Activated B cell treated with CpG ODN at 0.5 μM for 24 hours (primary cell): ENCODE measurements at regions of chr1 and their contacts with region 1.

Region 1: GRCh38 chr1:212857992-212858460 is at the start of gene FLVCR1:
- DNase-seq: peak; percentile 90
- ATAC-seq: peak; percentile 99
- H3K4me3 Mint-ChIP-seq: peak within 1 kb of the TSS; percentile 99
- H3K27ac Mint-ChIP-seq: peak within 1 kb of the TSS; percentile 93
- H3K4me1 Mint-ChIP-seq: peaks cover 22% of the 10 kb centered on the region
- H3K27me3 Mint-ChIP-seq: no peaks in the 10 kb centered on the region
- CTCF ChIP-seq: no peak
- total RNA-seq, gene FLVCR1: 12.7 and 16.4 TPM in 2 replicates

Region 2: GRCh38 chr1:212558693-212559480 is 299.1 kb before region 1 on chr1:
- CTCF ChIA-PET with region 1: no interaction called
- POLR2A ChIA-PET with region 1: interaction called, 9 read pairs
- intact Hi-C with region 1: loop called (anchors 2 kb)
- DNase-seq: peak; percentile 93
- ATAC-seq: peak; percentile 88
- H3K4me3 Mint-ChIP-seq: peak overlapping the region; percentile 88
- H3K27ac Mint-ChIP-seq: peak overlapping the region; percentile 93
- H3K4me1 Mint-ChIP-seq: peaks cover 13% of the 10 kb centered on the region
- H3K27me3 Mint-ChIP-seq: peaks cover 2% of the 10 kb centered on the region
- CTCF ChIP-seq: no peak

Region 3: GRCh38 chr1:212814537-212815334 is 43.3 kb before region 1 on chr1:
- CTCF ChIA-PET with region 1: no interaction called
- POLR2A ChIA-PET with region 1: interaction called, 9 read pairs
- intact Hi-C with region 1: loop called (anchors 5 kb)
- DNase-seq: no peak
- ATAC-seq: no peak
- H3K4me3 Mint-ChIP-seq: no peak overlapping the region
- H3K27ac Mint-ChIP-seq: no peak overlapping the region
- H3K4me1 Mint-ChIP-seq: peaks cover 6% of the 10 kb centered on the region
- H3K27me3 Mint-ChIP-seq: no peaks in the 10 kb centered on the region
- CTCF ChIP-seq: no peak

Region 4: DNA sequence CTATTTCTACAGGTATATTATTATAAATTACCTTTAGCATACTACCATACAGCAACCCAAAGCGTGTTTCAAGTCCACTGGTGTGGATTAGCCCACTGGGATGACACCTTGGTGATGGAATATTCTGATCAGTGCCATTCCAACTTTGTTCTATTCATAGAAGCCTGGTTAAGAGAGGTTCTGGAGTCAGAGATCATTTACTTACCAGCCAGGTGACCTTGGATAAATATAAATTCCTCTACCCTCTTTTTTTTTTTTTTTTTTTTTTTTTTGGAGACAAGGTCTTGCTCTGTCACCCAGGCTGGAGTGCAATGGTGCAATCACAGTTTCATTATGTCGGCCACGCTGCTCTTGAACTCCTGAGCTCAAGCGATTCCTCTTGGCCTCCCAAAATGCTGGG is 10.5 kb before region 1 on chr1 and contains the start of gene SPATA45:
- CTCF ChIA-PET with region 1: no interaction called
- POLR2A ChIA-PET with region 1: no interaction called
- intact Hi-C with region 1: loop called (anchors 1 kb)
- DNase-seq: no peak
- ATAC-seq: no peak
- H3K4me3 Mint-ChIP-seq: no peak within 1 kb of the TSS
- H3K27ac Mint-ChIP-seq: no peak within 1 kb of the TSS
- H3K4me1 Mint-ChIP-seq: no peaks in the 10 kb centered on the region
- H3K27me3 Mint-ChIP-seq: no peaks in the 10 kb centered on the region
- CTCF ChIP-seq: no peak
- total RNA-seq, gene SPATA45: 0.64 TPM in 1 of 2 replicates, not detected in the other

Region 5: GRCh38 chr1:213051127-213051880 is 193.3 kb after region 1 on chr1 and contains the start of gene RPS6KC1:
- CTCF ChIA-PET with region 1: no interaction called
- POLR2A ChIA-PET with region 1: no interaction called
- intact Hi-C with region 1: loop called (anchors 1 kb)
- DNase-seq: peak; percentile 73
- ATAC-seq: peak; percentile 93
- H3K4me3 Mint-ChIP-seq: peak within 1 kb of the TSS; percentile 97
- H3K27ac Mint-ChIP-seq: peak within 1 kb of the TSS; percentile 92
- H3K4me1 Mint-ChIP-seq: peaks cover 25% of the 10 kb centered on the region
- H3K27me3 Mint-ChIP-seq: peaks cover 20% of the 10 kb centered on the region
- CTCF ChIP-seq: no peak
- total RNA-seq, gene RPS6KC1: 12.9 and 13.0 TPM in 2 replicates